ENCODE measurements at regions of chr19 and their contacts with region 1.

Region 1: GRCh38 chr19:1103708-1104310 is at the start of gene GPX4:
- DNase-seq: peak; percentile 98
- ATAC-seq: peak; percentile 61
- H3K4me3 ChIP-seq: peak within 1 kb of the TSS; percentile 77
- H3K27ac ChIP-seq: peak within 1 kb of the TSS; percentile 94
- H3K4me1 ChIP-seq: peaks cover 31% of the 10 kb centered on the region
- H3K27me3 ChIP-seq: no peaks in the 10 kb centered on the region
- CTCF ChIP-seq: no peak
- total RNA-seq, gene GPX4: 517 and 644 TPM in 2 replicates

Region 2: DNA sequence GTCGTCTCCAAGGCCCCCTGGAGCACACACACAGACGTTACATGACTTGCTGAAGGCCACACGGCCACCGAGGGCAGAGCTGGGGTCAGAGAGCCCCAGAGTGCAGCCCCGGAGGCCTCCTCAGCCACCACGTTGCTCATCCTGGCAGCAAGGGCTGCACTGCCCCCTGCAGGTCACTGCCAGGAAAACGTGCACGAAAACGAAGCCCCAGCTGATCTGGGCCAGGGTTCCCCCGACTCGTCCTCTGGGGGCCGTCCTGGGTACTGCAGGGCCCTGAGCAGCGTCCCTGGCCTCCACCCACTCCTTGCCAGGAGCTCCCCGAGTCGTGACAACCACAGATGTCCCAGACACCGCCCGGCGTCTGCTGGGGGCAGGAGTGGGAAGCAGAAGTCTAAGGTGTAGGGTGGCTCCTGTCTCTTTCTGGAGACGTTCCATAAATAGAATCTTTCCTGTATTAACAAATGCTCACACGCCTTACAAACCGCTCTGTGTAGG is 593.2 kb before region 1 on chr19:
- CTCF ChIA-PET with region 1: interaction called, 15 read pairs
- POLR2A ChIA-PET with region 1: no interaction called
- intact Hi-C with region 1: no loop called
- DNase-seq: peak; percentile 82
- ATAC-seq: peak; percentile 5; the same call in 1 of the 2 replicates
- H3K4me3 ChIP-seq: no peak overlapping the region
- H3K27ac ChIP-seq: no peak overlapping the region
- H3K4me1 ChIP-seq: peaks cover 10% of the 10 kb centered on the region; the same call in 1 of the 2 replicates
- H3K27me3 ChIP-seq: no peaks in the 10 kb centered on the region
- CTCF ChIP-seq: peak; percentile 93

Region 3: DNA sequence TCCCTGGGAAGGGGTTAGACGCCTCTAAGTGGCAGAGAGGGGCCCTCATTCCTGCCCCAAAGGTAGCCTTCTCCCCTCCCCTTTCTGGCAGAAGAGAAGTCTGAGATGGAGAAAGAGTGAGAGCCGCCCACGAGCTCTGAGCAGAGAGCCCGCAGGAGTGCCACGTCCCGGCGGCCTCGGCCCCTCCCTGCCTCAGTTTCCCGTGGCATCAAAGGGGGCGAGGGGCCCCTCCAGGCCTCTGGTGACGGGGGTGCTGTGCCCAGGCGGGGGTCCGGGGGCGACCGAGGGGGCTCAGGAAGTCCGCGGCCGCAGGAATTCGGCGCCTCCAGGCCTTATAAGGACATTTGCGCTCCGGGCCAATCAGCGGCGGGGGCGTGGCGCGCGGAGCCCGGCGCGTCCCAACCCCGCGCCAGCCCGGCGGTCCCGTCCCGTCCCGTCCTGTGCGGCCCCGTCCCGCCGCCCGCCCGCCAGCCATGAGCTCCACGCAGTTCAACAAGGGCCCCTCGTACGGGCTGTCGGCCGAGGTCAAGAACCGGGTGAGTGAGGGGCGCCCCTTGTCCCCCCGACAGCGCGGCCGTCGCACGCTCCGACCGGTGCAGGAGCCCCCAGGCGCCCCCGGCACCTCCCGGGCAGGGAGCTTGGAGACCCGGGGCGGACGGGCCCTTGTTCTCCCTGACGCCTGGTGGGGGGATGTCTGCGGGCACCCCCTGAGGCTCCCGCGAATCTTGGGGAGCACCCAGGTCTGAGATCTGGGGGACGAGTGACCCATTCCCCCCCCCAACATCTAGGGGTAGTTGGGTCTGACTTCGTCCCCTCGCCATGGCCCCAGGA is 77.4 kb before region 1 on chr19 and contains the start of gene CNN2:
- CTCF ChIA-PET with region 1: no interaction called
- POLR2A ChIA-PET with region 1: no interaction called
- intact Hi-C with region 1: loop called (anchors 5 kb)
- DNase-seq: peak; percentile 66
- ATAC-seq: peak; percentile 76
- H3K4me3 ChIP-seq: peak within 1 kb of the TSS; percentile 95
- H3K27ac ChIP-seq: no peak within 1 kb of the TSS
- H3K4me1 ChIP-seq: no peaks in the 10 kb centered on the region; the same call in 1 of the 2 replicates
- H3K27me3 ChIP-seq: no peaks in the 10 kb centered on the region
- CTCF ChIP-seq: no peak
- total RNA-seq, gene CNN2: 97.9 and 107 TPM in 2 replicates

Region 4: GRCh38 chr19:1046836-1047695 is 56.7 kb before region 1 on chr19:
- CTCF ChIA-PET with region 1: no interaction called
- POLR2A ChIA-PET with region 1: no interaction called
- intact Hi-C with region 1: no loop called
- DNase-seq: no peak
- ATAC-seq: no peak
- H3K4me3 ChIP-seq: no peak overlapping the region
- H3K27ac ChIP-seq: no peak overlapping the region
- H3K4me1 ChIP-seq: peaks cover 4% of the 10 kb centered on the region; the same call in 1 of the 2 replicates
- H3K27me3 ChIP-seq: no peaks in the 10 kb centered on the region
- CTCF ChIP-seq: no peak

Region 5: GRCh38 chr19:1064661-1065605 is 38.9 kb before region 1 on chr19:
- CTCF ChIA-PET with region 1: no interaction called
- POLR2A ChIA-PET with region 1: no interaction called
- intact Hi-C with region 1: loop called (anchors 5 kb)
- DNase-seq: peak; percentile 69
- ATAC-seq: peak; percentile 63
- H3K4me3 ChIP-seq: no peak overlapping the region
- H3K27ac ChIP-seq: peak overlapping the region; percentile 53
- H3K4me1 ChIP-seq: peaks cover 18% of the 10 kb centered on the region
- H3K27me3 ChIP-seq: no peaks in the 10 kb centered on the region
- CTCF ChIP-seq: peak; percentile 59

Region 6: GRCh38 chr19:1089891-1090290 is 13.9 kb before region 1 on chr19:
- CTCF ChIA-PET with region 1: no interaction called
- POLR2A ChIA-PET with region 1: no interaction called
- intact Hi-C with region 1: no loop called
- DNase-seq: no peak
- ATAC-seq: no peak
- H3K4me3 ChIP-seq: no peak overlapping the region
- H3K27ac ChIP-seq: no peak overlapping the region
- H3K4me1 ChIP-seq: peaks cover 7% of the 10 kb centered on the region; the same call in 1 of the 2 replicates
- H3K27me3 ChIP-seq: no peaks in the 10 kb centered on the region
- CTCF ChIP-seq: no peak

Region 7: DNA sequence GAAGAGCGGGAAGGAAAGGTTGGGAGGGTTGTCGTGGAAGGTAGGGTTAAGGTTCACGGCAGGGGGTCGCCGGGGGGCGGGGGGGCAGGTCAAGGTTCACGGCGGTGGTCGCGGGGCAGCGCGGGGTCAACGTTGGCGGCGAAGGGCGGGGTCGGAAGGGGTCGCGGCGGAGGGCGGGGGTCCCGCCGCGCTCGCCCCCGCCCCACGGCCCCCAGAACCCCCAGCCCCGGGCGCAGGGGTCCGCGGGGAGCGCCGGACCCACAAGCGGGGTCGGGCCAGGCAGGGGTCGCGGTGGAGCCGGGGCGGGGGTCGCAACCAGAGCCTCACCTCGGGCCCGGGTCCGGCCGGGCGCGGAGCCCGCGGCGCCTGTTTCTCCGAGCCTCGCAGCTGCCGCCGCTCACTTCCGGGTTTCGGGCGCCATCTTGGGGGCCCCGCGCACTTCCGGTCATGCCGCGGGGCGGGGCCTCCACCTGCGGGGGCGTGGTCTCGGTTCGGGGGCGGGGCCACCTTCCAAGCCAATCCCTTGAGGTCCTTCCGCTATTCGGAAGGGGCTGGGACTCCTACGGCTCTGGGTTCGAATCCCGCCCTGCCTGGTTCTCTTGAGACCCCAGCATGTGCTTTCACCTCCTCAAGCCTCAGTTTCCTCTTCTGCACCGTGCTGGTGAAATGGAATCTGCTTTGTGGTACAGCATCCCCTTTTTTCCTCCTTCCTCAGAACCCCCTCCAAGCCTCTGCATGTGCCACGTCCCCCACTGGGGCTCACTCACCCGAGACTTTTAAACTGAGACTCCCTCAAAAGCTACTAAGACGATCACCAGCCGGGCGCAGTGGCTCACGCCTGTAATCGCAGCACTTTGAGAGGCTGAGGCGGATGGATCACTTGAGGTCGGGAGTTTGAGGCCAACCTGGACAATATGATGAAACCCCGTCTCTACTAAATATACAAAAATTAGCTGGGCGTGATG is 70.3 kb after region 1 on chr19 and contains the start of gene SBNO2:
- CTCF ChIA-PET with region 1: no interaction called
- POLR2A ChIA-PET with region 1: no interaction called
- intact Hi-C with region 1: loop called (anchors 10 kb)
- DNase-seq: peak; percentile 84
- ATAC-seq: peak; percentile 3; the same call in 1 of the 2 replicates
- H3K4me3 ChIP-seq: peak within 1 kb of the TSS; percentile 82
- H3K27ac ChIP-seq: peak within 1 kb of the TSS; percentile 98
- H3K4me1 ChIP-seq: peaks cover 64% of the 10 kb centered on the region
- H3K27me3 ChIP-seq: no peaks in the 10 kb centered on the region
- CTCF ChIP-seq: no peak
- total RNA-seq, gene SBNO2: 62.4 and 75.0 TPM in 2 replicates

Measured in PC-3 (cell line).